Heart right ventricle (tissue), 16 donors: ENCODE measurements at regions of chr7 and their contacts with region 1.

Region 1: GRCh38 chr7:119748251-119748860 is 524.6 kb upstream of the KCND2 start:
- DNase-seq: no peak
- ATAC-seq: no peak
- H3K4me3 ChIP-seq: no peak overlapping the region
- H3K27ac ChIP-seq: no peak overlapping the region
- H3K4me1 ChIP-seq: no peaks in the 10 kb centered on the region
- H3K27me3 ChIP-seq: no peaks in the 10 kb centered on the region
- CTCF ChIP-seq: no peak

Region 2: GRCh38 chr7:119606297-119606696 is 142.1 kb before region 1 on chr7:
- intact Hi-C with region 1: no loop called
- DNase-seq: no peak
- ATAC-seq: no peak
- H3K4me3 ChIP-seq: no peak overlapping the region
- H3K27ac ChIP-seq: no peak overlapping the region
- H3K4me1 ChIP-seq: no peaks in the 10 kb centered on the region
- H3K27me3 ChIP-seq: no peaks in the 10 kb centered on the region
- CTCF ChIP-seq: no peak

Region 3: DNA sequence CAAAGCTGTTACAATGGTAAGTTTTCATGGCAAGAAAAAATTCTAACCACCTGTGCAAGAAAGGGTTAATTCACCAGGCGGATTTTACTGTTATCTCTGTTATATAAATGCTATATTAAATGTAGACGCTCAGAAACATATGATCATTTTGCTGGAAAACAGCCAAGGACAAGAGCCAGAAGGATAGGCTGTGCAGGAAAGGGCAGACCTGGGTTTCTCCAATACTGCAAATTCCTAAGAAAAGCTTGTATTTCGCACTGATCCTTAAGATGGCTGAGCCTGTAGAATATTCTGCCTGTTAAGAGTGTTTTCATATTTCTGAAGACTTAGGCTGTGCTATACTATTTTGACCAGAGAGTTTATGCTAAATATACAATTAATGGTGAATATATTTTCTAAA is 39.5 kb before region 1 on chr7:
- intact Hi-C with region 1: loop called in 1 of 10 experiments (anchors 2 kb)
- DNase-seq: no peak
- ATAC-seq: no peak
- H3K4me3 ChIP-seq: no peak overlapping the region
- H3K27ac ChIP-seq: no peak overlapping the region
- H3K4me1 ChIP-seq: no peaks in the 10 kb centered on the region
- H3K27me3 ChIP-seq: no peaks in the 10 kb centered on the region
- CTCF ChIP-seq: no peak

Region 4: GRCh38 chr7:121366852-121367431 is 1618.6 kb after region 1 on chr7:
- intact Hi-C with region 1: no loop called
- DNase-seq: no peak
- ATAC-seq: no peak
- H3K4me3 ChIP-seq: no peak overlapping the region
- H3K27ac ChIP-seq: no peak overlapping the region
- H3K4me1 ChIP-seq: peaks cover 0 to 22% (median 8%) of the 10 kb centered on the region in 9 donors
- H3K27me3 ChIP-seq: no peaks in the 10 kb centered on the region
- CTCF ChIP-seq: peak; percentile 55 to 90 (median 80)